A673 (cell line): ENCODE measurements at regions of chr11 and their contacts with region 1.

Region 1: DNA sequence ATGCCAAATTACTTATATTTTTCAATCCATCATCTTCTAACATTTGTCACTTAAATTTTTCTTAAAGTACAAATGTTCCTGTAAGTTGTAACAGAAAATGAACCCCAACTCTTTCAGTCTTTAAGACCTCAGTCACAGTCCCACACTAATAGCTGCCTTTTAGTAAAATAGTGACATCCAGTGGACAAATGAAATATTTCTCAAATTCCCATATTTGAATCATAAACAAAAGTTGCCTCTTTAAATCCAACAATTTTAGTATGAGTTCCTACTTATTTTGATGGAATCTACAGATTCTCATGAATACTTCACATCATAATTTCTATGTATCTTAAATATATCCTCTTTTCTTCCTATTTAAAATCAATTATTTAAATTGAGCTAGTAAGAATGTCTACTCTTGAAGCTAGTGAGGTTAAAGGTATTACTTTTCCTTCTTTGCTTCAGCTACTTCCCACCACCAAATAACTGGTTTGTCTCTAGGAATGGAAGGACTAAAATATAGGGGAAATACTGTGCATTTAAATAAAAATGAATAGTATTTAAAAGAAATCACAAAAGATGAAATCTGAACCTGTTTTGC is 9.2 kb downstream of the LIN7C start:
- DNase-seq: peak; percentile 84
- H3K4me3 ChIP-seq: no peak overlapping the region
- H3K27ac ChIP-seq: no peak overlapping the region
- H3K4me1 ChIP-seq: peaks cover 15% of the 10 kb centered on the region
- H3K27me3 ChIP-seq: no peaks in the 10 kb centered on the region
- CTCF ChIP-seq: peak; percentile 95

Region 2: DNA sequence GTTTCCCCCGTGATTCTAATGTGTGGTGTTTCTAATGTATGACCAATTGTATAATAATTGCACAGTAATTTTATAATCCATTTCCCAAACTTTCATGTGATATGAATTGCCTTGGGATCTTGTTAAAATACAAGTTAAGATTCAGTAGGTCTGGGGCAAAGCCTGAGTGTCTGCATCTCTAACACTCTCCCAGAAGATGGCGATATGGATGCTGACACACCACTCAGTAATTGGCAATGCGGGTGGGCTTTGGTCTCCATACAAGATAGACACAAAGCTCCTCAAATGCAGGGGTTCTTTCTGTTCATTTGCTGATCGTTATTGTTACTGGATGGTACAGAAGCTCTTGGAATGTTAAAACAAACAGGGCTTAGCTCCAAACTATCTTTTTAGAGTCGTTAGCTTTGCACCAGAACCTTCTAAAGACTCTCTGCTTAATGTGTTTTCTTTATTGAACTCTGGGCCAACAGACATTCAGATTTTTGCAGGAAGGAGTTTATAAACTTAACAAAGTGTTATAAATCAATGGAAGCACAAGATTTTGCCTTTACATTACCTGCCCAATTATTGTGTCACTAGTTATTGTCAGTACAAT is 1210.8 kb before region 1 on chr11:
- CTCF ChIA-PET with region 1: no interaction called
- POLR2A ChIA-PET with region 1: no interaction called
- intact Hi-C with region 1: loop called (anchors 5 kb)
- DNase-seq: peak; percentile 48
- H3K4me3 ChIP-seq: no peak overlapping the region
- H3K27ac ChIP-seq: no peak overlapping the region
- H3K4me1 ChIP-seq: no peaks in the 10 kb centered on the region
- H3K27me3 ChIP-seq: no peaks in the 10 kb centered on the region
- CTCF ChIP-seq: peak; percentile 56

Region 3: GRCh38 chr11:27456140-27456794 is 41.1 kb before region 1 on chr11:
- CTCF ChIA-PET with region 1: no interaction called
- POLR2A ChIA-PET with region 1: no interaction called
- intact Hi-C with region 1: no loop called
- DNase-seq: peak; percentile 56
- H3K4me3 ChIP-seq: no peak overlapping the region
- H3K27ac ChIP-seq: no peak overlapping the region
- H3K4me1 ChIP-seq: peaks cover 33% of the 10 kb centered on the region
- H3K27me3 ChIP-seq: no peaks in the 10 kb centered on the region
- CTCF ChIP-seq: no peak

Region 4: GRCh38 chr11:27571156-27571825 is 73.9 kb after region 1 on chr11:
- CTCF ChIA-PET with region 1: no interaction called
- POLR2A ChIA-PET with region 1: no interaction called
- intact Hi-C with region 1: no loop called
- DNase-seq: no peak
- H3K4me3 ChIP-seq: no peak overlapping the region
- H3K27ac ChIP-seq: no peak overlapping the region
- H3K4me1 ChIP-seq: no peaks in the 10 kb centered on the region
- H3K27me3 ChIP-seq: peaks cover 37% of the 10 kb centered on the region
- CTCF ChIP-seq: no peak